ENCODE measurements at regions of chr2 and their contacts with region 1.

Region 1: GRCh38 chr2:143110758-143111428 is 18.3 kb upstream of the ARHGAP15 start:
- DNase-seq: peak; percentile 78
- ATAC-seq: peak; percentile 90
- H3K4me3 Mint-ChIP-seq: peak overlapping the region; percentile 28
- H3K27ac Mint-ChIP-seq: peak overlapping the region; percentile 86
- H3K4me1 Mint-ChIP-seq: peaks cover 26% of the 10 kb centered on the region
- H3K27me3 Mint-ChIP-seq: no peaks in the 10 kb centered on the region

Region 2: DNA sequence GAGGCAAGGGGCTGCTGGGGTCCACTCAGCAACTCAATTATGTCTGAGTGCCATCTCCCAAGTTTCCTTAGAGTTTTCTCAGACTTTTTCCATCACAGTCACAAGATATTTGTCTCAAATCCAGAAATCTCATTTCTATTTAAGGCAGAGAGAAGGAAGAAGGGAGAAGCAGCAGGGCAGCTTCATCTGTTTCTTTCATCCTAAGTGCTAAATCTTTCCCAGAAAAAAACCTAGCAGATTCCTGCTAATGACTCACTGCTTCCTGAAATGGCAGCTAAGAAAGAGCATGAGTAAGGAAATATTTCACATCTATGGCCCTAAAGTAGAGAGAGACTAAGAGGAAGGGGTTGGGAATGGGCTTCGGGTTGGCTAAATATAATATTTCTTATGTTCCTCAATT is 145.4 kb before region 1 on chr2:
- CTCF ChIA-PET with region 1: no interaction called
- DNase-seq: no peak
- ATAC-seq: no peak
- H3K4me3 Mint-ChIP-seq: no peak overlapping the region
- H3K27ac Mint-ChIP-seq: no peak overlapping the region
- H3K4me1 Mint-ChIP-seq: no peaks in the 10 kb centered on the region
- H3K27me3 Mint-ChIP-seq: peaks cover 10% of the 10 kb centered on the region

Region 3: GRCh38 chr2:143034292-143035074 is 76.4 kb before region 1 on chr2:
- CTCF ChIA-PET with region 1: interaction called, 25 read pairs
- DNase-seq: peak; percentile 70
- ATAC-seq: peak; percentile 89
- H3K4me3 Mint-ChIP-seq: no peak overlapping the region
- H3K27ac Mint-ChIP-seq: no peak overlapping the region
- H3K4me1 Mint-ChIP-seq: peaks cover 10% of the 10 kb centered on the region
- H3K27me3 Mint-ChIP-seq: peaks cover 2% of the 10 kb centered on the region

Region 4: GRCh38 chr2:143128681-143129580 is 18.0 kb after region 1 on chr2 and contains the start of gene ARHGAP15:
- CTCF ChIA-PET with region 1: interaction called, 49 read pairs
- DNase-seq: peak; percentile 88
- ATAC-seq: peak; percentile 85
- H3K4me3 Mint-ChIP-seq: peak within 1 kb of the TSS; percentile 77
- H3K27ac Mint-ChIP-seq: peak within 1 kb of the TSS; percentile 100
- H3K4me1 Mint-ChIP-seq: peaks cover 46% of the 10 kb centered on the region
- H3K27me3 Mint-ChIP-seq: no peaks in the 10 kb centered on the region
- total RNA-seq, gene ARHGAP15: 101 to 152 TPM

Region 5: DNA sequence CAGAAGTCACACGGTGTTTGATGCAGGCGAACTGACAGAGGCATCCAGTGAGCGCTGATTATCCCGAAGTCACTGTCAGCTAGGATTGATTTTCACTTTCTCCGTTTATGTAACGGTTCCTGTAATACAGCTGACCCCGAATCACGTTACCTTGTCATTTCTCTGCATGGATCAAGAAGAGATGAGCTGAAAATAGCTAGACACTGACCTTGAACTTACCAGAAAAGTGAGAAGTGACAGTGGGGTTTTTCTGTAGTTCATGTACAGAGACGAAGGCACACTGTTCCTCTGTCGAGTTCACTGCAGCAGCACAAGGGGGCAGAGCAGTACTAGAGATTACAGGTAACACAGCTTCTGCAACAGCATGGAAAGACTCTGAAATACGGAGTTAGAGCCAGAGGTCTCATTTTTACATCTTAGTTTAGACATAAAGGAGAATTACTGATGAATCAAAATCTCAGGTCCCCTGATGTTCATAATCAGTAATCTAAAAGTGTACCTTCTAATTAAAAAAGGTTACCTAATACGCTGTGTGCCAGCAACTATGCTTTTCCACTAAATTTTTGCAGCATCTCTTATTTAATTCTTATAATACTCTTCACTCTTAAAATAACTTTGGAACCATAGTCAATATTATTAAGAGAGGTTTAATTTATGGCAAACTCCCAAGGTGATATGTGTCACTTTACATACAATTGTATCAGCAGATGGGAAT is 51.4 kb after region 1 on chr2:
- CTCF ChIA-PET with region 1: interaction called, 11 read pairs
- DNase-seq: peak; percentile 58
- ATAC-seq: peak; percentile 90
- H3K4me3 Mint-ChIP-seq: no peak overlapping the region
- H3K27ac Mint-ChIP-seq: no peak overlapping the region
- H3K4me1 Mint-ChIP-seq: peaks cover 49% of the 10 kb centered on the region
- H3K27me3 Mint-ChIP-seq: no peaks in the 10 kb centered on the region

Region 6: DNA sequence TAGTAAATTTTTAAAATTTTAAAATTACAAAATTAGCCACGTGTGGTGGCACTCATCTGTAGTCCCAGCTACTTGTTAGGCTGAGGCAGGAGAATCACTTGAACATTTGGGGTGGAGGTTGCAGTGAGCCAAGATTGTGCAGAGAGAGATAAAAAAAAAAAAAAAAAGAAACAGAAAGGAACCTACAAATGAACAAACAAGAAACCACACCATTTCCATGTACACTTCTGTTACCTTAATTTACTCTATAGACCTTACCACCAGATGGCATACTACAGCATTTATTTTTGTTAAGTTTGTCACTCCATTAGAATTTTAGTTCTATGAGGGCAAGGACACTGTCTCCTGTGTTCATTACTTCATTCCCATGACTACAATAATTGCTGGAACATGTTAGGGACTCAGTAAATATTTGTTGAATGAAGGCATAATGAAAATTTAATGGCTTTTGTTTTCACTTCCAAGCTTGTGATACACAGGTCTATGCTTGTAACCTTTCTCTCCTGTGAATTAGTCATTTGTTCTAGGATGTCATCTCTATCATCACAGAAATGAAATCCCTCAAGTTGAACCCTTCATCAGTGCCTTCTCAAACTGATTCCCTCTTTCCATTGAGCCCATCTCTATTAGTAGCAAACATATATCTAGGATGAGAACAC is 94.3 kb after region 1 on chr2:
- CTCF ChIA-PET with region 1: interaction called, 10 read pairs
- DNase-seq: no peak
- ATAC-seq: peak; percentile 82
- H3K4me3 Mint-ChIP-seq: no peak overlapping the region
- H3K27ac Mint-ChIP-seq: peak overlapping the region; percentile 75
- H3K4me1 Mint-ChIP-seq: peaks cover 38% of the 10 kb centered on the region
- H3K27me3 Mint-ChIP-seq: no peaks in the 10 kb centered on the region

Region 7: DNA sequence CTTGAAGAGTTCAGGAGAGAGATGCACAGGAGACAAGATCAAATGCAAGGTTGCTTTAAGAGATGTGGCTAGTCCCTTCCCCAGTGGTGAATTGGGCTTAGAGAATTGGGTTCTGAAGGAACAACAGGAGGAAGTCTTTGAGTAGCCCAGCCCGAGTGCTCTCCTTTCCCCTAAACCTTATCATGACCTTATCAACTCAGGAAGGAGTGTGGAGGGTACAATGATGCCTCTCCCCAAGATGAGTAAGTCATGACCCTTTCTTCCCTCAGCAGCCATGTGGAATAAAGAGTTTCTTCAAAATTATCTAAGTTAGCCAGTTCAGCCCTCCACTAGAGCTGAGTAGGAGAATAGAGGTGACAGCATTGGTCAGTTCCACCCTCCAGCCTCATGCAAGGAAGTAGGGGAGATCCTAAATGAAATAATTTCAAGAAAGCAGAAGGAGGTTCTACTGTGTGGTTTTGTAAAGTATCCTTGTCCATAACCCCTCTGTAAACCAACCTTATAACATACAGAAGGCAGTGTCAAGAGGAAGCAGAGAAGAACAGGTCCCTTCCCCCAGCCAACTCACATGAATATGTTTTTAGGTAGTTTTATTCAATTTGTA is 106.7 kb after region 1 on chr2:
- CTCF ChIA-PET with region 1: interaction called, 40 read pairs
- DNase-seq: no peak
- ATAC-seq: no peak
- H3K4me3 Mint-ChIP-seq: no peak overlapping the region
- H3K27ac Mint-ChIP-seq: peak overlapping the region; percentile 45
- H3K4me1 Mint-ChIP-seq: peaks cover 18% of the 10 kb centered on the region
- H3K27me3 Mint-ChIP-seq: no peaks in the 10 kb centered on the region

Measured in activated CD8-positive, alpha-beta memory T cell treated with anti-CD3 and anti-CD28 coated beads, Interleukin-2, amount 10 ng/mL, durations not matched to agents 7 days and 5 days (primary cell).